ENCODE measurements at regions of chr4 and their contacts with region 1.

Region 1: DNA sequence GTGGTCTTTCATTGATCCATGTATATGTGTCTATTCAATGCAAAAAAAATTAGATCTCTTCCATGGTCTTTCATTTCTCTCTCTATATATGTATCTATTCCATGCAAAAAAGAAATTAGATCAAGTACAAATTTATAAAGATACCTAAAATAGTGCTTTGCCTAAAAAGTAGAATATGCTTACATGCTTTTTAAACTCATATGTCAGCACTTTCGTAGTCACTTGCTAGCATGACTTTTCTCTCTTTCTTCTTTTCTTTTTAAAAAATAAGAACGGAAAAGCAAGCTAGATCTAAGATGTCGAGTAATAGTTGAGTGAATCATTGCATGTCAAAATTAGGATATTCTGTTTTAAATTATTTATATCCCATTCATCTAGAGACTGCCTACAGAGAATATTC is 50.9 kb downstream of the PKD2 start:
- DNase-seq: no peak
- H3K27ac ChIP-seq: no peak overlapping the region
- CTCF ChIP-seq: no peak

Region 2: DNA sequence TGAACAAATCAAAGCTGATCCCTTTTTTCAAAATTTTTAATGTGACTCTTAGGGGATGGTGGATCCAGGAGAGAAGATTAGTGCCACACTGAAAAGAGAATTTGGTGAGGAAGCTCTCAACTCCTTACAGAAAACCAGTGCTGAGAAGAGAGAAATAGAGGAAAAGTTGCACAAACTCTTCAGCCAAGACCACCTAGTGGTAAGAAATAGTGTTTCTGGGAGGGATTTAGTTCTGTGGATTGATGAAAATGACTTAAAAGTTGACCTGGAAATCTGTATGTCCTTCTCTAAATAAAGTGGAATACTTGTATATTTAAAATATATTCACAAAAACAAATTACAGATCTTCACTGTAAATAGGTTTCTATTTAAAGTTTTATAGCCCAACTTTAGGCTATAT is 606.8 kb before region 1 on chr4:
- CTCF ChIA-PET with region 1: interaction called, 10 read pairs
- POLR2A ChIA-PET with region 1: no interaction called
- DNase-seq: peak; percentile 2
- H3K27ac ChIP-seq: no peak overlapping the region
- CTCF ChIP-seq: no peak

Region 3: GRCh38 chr4:87745064-87745807 is 313.1 kb before region 1 on chr4:
- CTCF ChIA-PET with region 1: no interaction called
- POLR2A ChIA-PET with region 1: no interaction called
- DNase-seq: no peak
- H3K27ac ChIP-seq: no peak overlapping the region
- CTCF ChIP-seq: no peak